ENCODE measurements at regions of chr6 and their contacts with region 1.

Region 1: DNA sequence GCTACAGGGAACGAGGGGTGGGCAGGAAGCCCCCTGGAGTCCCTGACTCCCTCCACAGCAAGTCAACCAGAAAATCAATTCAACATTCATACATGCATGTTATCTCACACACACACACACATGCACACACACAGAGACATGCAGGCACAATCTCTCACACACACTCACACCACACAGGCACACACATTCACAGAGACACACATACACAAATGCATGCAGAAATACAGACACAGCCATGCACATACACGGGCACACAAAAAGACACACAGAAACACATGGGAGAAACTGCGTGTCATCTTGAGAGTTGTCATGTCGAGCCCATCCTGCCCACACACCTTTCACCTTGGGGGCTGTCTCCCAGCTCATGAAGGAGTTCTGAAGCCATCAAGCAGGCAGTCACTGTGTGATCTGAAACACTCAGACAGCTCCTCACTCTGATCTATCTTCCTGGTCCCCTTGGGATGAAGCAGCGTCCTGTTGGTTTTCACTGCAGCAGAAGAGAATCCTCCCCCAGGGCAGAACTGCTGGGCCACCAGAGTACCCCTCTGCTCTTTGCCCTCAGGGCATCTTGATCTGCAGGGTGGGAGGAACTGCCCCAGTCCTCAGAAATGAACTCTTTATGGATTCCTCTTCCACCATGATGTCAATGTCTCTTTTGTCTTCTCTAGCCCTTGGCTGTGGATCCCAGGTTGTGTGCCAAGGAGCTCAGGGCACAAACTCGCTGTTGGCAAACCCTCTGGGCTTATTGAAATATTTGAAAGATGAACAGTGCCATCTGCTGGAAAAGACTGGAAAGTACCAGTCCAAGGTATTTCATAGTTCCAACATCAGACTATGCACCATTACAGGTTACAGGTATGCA is 8.8 kb downstream of the RAET1L start:
- DNase-seq: peak; percentile 41
- ATAC-seq: peak; percentile 82
- H3K4me3 ChIP-seq: no peak overlapping the region
- H3K27ac ChIP-seq: no peak overlapping the region
- H3K4me1 ChIP-seq: no peaks in the 10 kb centered on the region; the same call in 1 of the 2 replicates
- H3K27me3 ChIP-seq: peaks cover 13% of the 10 kb centered on the region
- CTCF ChIP-seq: peak; percentile 77

Region 2: GRCh38 chr6:149934249-149935156 is 82.1 kb before region 1 on chr6:
- CTCF ChIA-PET with region 1: no interaction called
- POLR2A ChIA-PET with region 1: no interaction called
- in situ Hi-C with region 1: no loop called
- intact Hi-C with region 1: loop called (anchors 2 kb)
- DNase-seq: peak; percentile 61
- ATAC-seq: peak; percentile 60
- H3K4me3 ChIP-seq: no peak overlapping the region
- H3K27ac ChIP-seq: no peak overlapping the region
- H3K4me1 ChIP-seq: peaks cover 6% of the 10 kb centered on the region
- H3K27me3 ChIP-seq: peaks cover 19% of the 10 kb centered on the region
- CTCF ChIP-seq: peak; percentile 81

Region 3: GRCh38 chr6:150142670-150143515 is 126.3 kb after region 1 on chr6 and contains the start of gene PPP1R14C:
- CTCF ChIA-PET with region 1: no interaction called
- POLR2A ChIA-PET with region 1: no interaction called
- in situ Hi-C with region 1: no loop called
- intact Hi-C with region 1: no loop called
- DNase-seq: no peak
- ATAC-seq: peak; percentile 85
- H3K4me3 ChIP-seq: peak within 1 kb of the TSS; percentile 28 to 41
- H3K27ac ChIP-seq: no peak within 1 kb of the TSS
- H3K4me1 ChIP-seq: peaks cover 7% of the 10 kb centered on the region; the same call in 1 of the 2 replicates
- H3K27me3 ChIP-seq: peaks cover 56% of the 10 kb centered on the region
- CTCF ChIP-seq: no peak
- total RNA-seq, gene PPP1R14C: not detected